B cell (primary cell): ENCODE measurements at regions of chr16 and their contacts with region 1.

Region 1: DNA sequence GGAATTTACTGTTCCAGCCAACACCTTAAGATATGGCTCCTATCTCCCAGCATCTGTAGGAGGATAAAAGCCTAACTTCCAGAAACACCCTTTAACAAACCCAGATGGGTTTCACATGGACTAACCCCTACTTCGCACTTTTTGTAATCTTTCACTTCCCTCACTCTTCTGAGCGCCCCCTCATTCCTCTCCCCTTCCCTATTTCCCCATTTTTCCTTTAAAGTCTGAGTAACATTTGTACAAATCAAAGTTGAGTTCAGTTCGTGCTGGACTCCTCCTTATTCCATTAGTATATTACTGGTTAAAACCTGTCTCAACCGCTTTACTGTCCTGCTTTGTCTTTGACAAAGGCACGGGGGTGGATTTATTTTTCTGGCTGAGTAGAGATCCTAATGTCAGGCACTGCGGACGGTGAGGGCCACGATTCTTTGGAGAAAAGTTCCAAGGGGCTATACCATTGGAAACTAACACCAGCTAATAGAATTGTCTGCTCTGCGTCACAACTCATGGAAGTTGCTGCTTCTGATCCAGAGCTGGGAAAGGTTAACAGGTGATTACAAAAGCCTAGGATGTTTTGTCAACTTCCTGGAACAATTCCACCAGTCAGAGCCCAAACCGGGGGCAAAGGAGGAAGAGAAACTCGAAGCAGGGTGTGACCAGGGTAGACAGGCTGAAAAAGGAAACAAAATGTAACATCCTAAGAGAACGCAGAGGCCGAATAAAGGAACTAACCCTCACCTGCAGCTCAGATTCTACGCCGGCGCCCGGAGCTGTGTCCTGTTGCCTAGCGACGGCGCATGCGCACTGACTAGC is 12.5 kb downstream of the TAT start:
- DNase-seq: no peak
- ATAC-seq: peak; percentile 81
- H3K4me3 ChIP-seq: peak overlapping the region in 4 of 5 experiments; percentile 48 to 73 (median 59)
- H3K4me3 Mint-ChIP-seq: peak overlapping the region; percentile 83
- H3K27ac ChIP-seq: peak overlapping the region; percentile 99
- H3K27ac Mint-ChIP-seq: peak overlapping the region; percentile 94
- H3K4me1 ChIP-seq: peaks cover 33 to 34% of the 10 kb centered on the region in 2 donors
- H3K4me1 Mint-ChIP-seq: peaks cover 34% of the 10 kb centered on the region
- H3K27me3 ChIP-seq: no peaks in the 10 kb centered on the region
- H3K27me3 Mint-ChIP-seq: no peaks in the 10 kb centered on the region
- CTCF ChIP-seq: no peak

Region 2: GRCh38 chr16:70800781-70801530 is 763.4 kb before region 1 on chr16 and contains the start of gene VAC14:
- CTCF ChIA-PET with region 1: no interaction called
- POLR2A ChIA-PET with region 1: no interaction called
- intact Hi-C with region 1: loop called (anchors 5 kb)
- DNase-seq: peak; percentile 97
- ATAC-seq: peak; percentile 98
- H3K4me3 ChIP-seq: peak within 1 kb of the TSS; percentile 38 to 86 (median 66)
- H3K4me3 Mint-ChIP-seq: peak within 1 kb of the TSS; percentile 98
- H3K27ac ChIP-seq: peak within 1 kb of the TSS; percentile 69 to 90
- H3K27ac Mint-ChIP-seq: peak within 1 kb of the TSS; percentile 96
- H3K4me1 ChIP-seq: peaks cover 16 to 21% of the 10 kb centered on the region in 2 donors
- H3K4me1 Mint-ChIP-seq: peaks cover 36% of the 10 kb centered on the region
- H3K27me3 ChIP-seq: peaks cover 0 to 6% (median 0%) of the 10 kb centered on the region in 4 experiments
- H3K27me3 Mint-ChIP-seq: no peaks in the 10 kb centered on the region
- CTCF ChIP-seq: no peak
- total RNA-seq, gene VAC14: 59.7 and 64.7 TPM in 2 replicates

Region 3: GRCh38 chr16:71255721-71256120 is 308.6 kb before region 1 on chr16:
- CTCF ChIA-PET with region 1: no interaction called
- POLR2A ChIA-PET with region 1: no interaction called
- intact Hi-C with region 1: no loop called
- DNase-seq: no peak
- ATAC-seq: no peak
- H3K4me3 ChIP-seq: no peak overlapping the region
- H3K4me3 Mint-ChIP-seq: no peak overlapping the region
- H3K27ac ChIP-seq: no peak overlapping the region
- H3K27ac Mint-ChIP-seq: no peak overlapping the region
- H3K4me1 ChIP-seq: peaks cover 10 to 13% of the 10 kb centered on the region in 2 donors
- H3K4me1 Mint-ChIP-seq: peaks cover 14% of the 10 kb centered on the region
- H3K27me3 ChIP-seq: no peaks in the 10 kb centered on the region
- H3K27me3 Mint-ChIP-seq: peaks cover 3% of the 10 kb centered on the region
- CTCF ChIP-seq: no peak

Region 4: GRCh38 chr16:71412270-71413160 is 151.8 kb before region 1 on chr16:
- CTCF ChIA-PET with region 1: interaction called, 18 read pairs
- POLR2A ChIA-PET with region 1: no interaction called
- intact Hi-C with region 1: no loop called
- DNase-seq: peak; percentile 80
- ATAC-seq: peak; percentile 73
- H3K4me3 ChIP-seq: no peak overlapping the region
- H3K4me3 Mint-ChIP-seq: no peak overlapping the region
- H3K27ac ChIP-seq: no peak overlapping the region
- H3K27ac Mint-ChIP-seq: no peak overlapping the region
- H3K4me1 ChIP-seq: peaks cover 6 to 12% of the 10 kb centered on the region in 2 donors
- H3K4me1 Mint-ChIP-seq: peaks cover 7% of the 10 kb centered on the region
- H3K27me3 ChIP-seq: peaks cover 0 to 12% (median 2%) of the 10 kb centered on the region in 4 experiments
- H3K27me3 Mint-ChIP-seq: peaks cover 45% of the 10 kb centered on the region
- CTCF ChIP-seq: peak; percentile 89

Region 5: GRCh38 chr16:71499775-71500364 is 64.5 kb before region 1 on chr16:
- CTCF ChIA-PET with region 1: interaction called, 17 read pairs
- POLR2A ChIA-PET with region 1: no interaction called
- intact Hi-C with region 1: no loop called
- DNase-seq: peak; percentile 80
- ATAC-seq: peak; percentile 69
- H3K4me3 ChIP-seq: no peak overlapping the region
- H3K4me3 Mint-ChIP-seq: no peak overlapping the region
- H3K27ac ChIP-seq: no peak overlapping the region
- H3K27ac Mint-ChIP-seq: no peak overlapping the region
- H3K4me1 ChIP-seq: no peaks in the 10 kb centered on the region
- H3K4me1 Mint-ChIP-seq: no peaks in the 10 kb centered on the region
- H3K27me3 ChIP-seq: peaks cover 0 to 5% (median 1%) of the 10 kb centered on the region in 4 experiments
- H3K27me3 Mint-ChIP-seq: peaks cover 16% of the 10 kb centered on the region
- CTCF ChIP-seq: peak; percentile 91

Region 6: GRCh38 chr16:71552698-71553451 is 11.5 kb before region 1 on chr16:
- CTCF ChIA-PET with region 1: interaction called, 19 read pairs
- POLR2A ChIA-PET with region 1: interaction called, 7 read pairs
- intact Hi-C with region 1: no loop called
- DNase-seq: no peak
- ATAC-seq: no peak
- H3K4me3 ChIP-seq: no peak overlapping the region
- H3K4me3 Mint-ChIP-seq: no peak overlapping the region
- H3K27ac ChIP-seq: no peak overlapping the region
- H3K27ac Mint-ChIP-seq: no peak overlapping the region
- H3K4me1 ChIP-seq: no peaks in the 10 kb centered on the region
- H3K4me1 Mint-ChIP-seq: peaks cover 8% of the 10 kb centered on the region
- H3K27me3 ChIP-seq: peaks cover 0 to 5% (median 2%) of the 10 kb centered on the region in 4 experiments
- H3K27me3 Mint-ChIP-seq: peaks cover 13% of the 10 kb centered on the region
- CTCF ChIP-seq: no peak

Region 7: GRCh38 chr16:71746442-71747046 is 182.2 kb after region 1 on chr16:
- CTCF ChIA-PET with region 1: interaction called, 15 read pairs
- POLR2A ChIA-PET with region 1: no interaction called
- intact Hi-C with region 1: loop called (anchors 1 kb)
- DNase-seq: peak; percentile 75
- ATAC-seq: peak; percentile 58
- H3K4me3 ChIP-seq: no peak overlapping the region
- H3K4me3 Mint-ChIP-seq: no peak overlapping the region
- H3K27ac ChIP-seq: no peak overlapping the region
- H3K27ac Mint-ChIP-seq: peak overlapping the region; percentile 50
- H3K4me1 ChIP-seq: no peaks in the 10 kb centered on the region
- H3K4me1 Mint-ChIP-seq: peaks cover 4% of the 10 kb centered on the region
- H3K27me3 ChIP-seq: no peaks in the 10 kb centered on the region
- H3K27me3 Mint-ChIP-seq: no peaks in the 10 kb centered on the region
- CTCF ChIP-seq: peak; percentile 85

Region 8: GRCh38 chr16:72664509-72665225 is 1100.3 kb after region 1 on chr16:
- CTCF ChIA-PET with region 1: no interaction called
- POLR2A ChIA-PET with region 1: no interaction called
- intact Hi-C with region 1: loop called (anchors 10 kb)
- DNase-seq: peak; percentile 97
- ATAC-seq: peak; percentile 99
- H3K4me3 ChIP-seq: peak overlapping the region; percentile 87 to 99 (median 92)
- H3K4me3 Mint-ChIP-seq: peak overlapping the region; percentile 100
- H3K27ac ChIP-seq: peak overlapping the region; percentile 84 to 92
- H3K27ac Mint-ChIP-seq: peak overlapping the region; percentile 97
- H3K4me1 ChIP-seq: peaks cover 14% of the 10 kb centered on the region in 2 donors
- H3K4me1 Mint-ChIP-seq: peaks cover 15% of the 10 kb centered on the region
- H3K27me3 ChIP-seq: no peaks in the 10 kb centered on the region
- H3K27me3 Mint-ChIP-seq: no peaks in the 10 kb centered on the region
- CTCF ChIP-seq: no peak